Activated T-helper 2 cell treated with anti-CD3 and anti-CD28 coated beads, Interferon-gamma antibody, Interleukin-2, Interleukin-4, amounts not matched to agents 10 μg/mL and 5 μg/mL and 100 μg/mL, durations not matched to agents 14 hours and 24 hours and 36 hours (primary cell): ENCODE measurements at regions of chr12 and their contacts with region 1.

Region 1: GRCh38 chr12:27821259-27821973 is 41.4 kb upstream of the MANSC4 start:
- DNase-seq: no peak
- H3K4me3 Mint-ChIP-seq: no peak overlapping the region
- H3K27ac Mint-ChIP-seq: no peak overlapping the region
- H3K4me1 Mint-ChIP-seq: peaks cover 44% of the 10 kb centered on the region
- H3K27me3 Mint-ChIP-seq: peaks cover 36% of the 10 kb centered on the region

Region 2: GRCh38 chr12:27332407-27333301 is 488.8 kb before region 1 on chr12 and contains the start of gene BMAL2:
- intact Hi-C with region 1: loop called (anchors 5 kb)
- DNase-seq: peak; percentile 40
- H3K4me3 Mint-ChIP-seq: peak within 1 kb of the TSS; percentile 98
- H3K27ac Mint-ChIP-seq: peak within 1 kb of the TSS; percentile 96
- H3K4me1 Mint-ChIP-seq: peaks cover 50% of the 10 kb centered on the region
- H3K27me3 Mint-ChIP-seq: no peaks in the 10 kb centered on the region
- total RNA-seq, gene BMAL2: 58.9 and 59.6 TPM in 2 replicates

Region 3: DNA sequence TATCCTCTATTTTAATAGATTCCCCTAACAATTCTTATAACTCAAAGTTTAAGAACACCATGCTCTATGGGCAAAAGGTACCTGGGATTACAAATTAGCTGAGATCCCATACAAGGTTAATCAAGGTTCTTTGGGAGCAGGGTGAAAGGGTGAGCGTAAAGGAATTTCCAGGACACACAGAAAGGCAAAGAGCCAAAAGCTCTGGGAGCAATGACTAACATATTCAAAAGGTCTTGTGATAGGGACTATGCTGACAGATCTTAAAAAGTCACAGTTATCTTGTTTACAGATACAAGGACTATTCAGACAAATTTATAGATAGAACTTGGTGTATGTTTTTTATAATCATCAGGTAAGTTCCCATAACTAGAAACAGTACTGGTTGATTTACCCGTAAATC is 316.9 kb before region 1 on chr12:
- intact Hi-C with region 1: loop called (anchors 1 kb)
- DNase-seq: no peak
- H3K4me3 Mint-ChIP-seq: no peak overlapping the region
- H3K27ac Mint-ChIP-seq: no peak overlapping the region
- H3K4me1 Mint-ChIP-seq: peaks cover 30% of the 10 kb centered on the region
- H3K27me3 Mint-ChIP-seq: peaks cover 32% of the 10 kb centered on the region

Region 4: DNA sequence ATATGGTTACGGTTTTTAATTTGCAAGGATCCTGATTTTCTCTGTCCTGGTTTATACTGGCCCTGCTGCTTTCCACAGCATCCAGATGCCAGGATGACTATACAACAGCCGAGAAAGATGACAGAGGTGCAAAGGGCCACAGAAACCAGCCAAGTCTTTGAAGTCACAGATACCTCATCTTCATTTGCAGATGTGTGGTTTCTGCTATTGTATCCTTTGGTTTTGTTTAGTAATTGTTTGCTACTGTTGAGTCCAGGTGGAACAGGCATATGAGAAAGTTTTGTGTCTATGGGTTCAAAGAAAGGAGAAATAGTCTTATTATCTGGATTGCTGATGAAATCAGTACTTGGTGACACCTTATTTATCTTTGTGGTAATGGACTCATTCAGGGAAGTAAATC is 58.7 kb before region 1 on chr12:
- intact Hi-C with region 1: loop called (anchors 2 kb)
- DNase-seq: no peak
- H3K4me3 Mint-ChIP-seq: no peak overlapping the region
- H3K27ac Mint-ChIP-seq: no peak overlapping the region
- H3K4me1 Mint-ChIP-seq: peaks cover 20% of the 10 kb centered on the region
- H3K27me3 Mint-ChIP-seq: no peaks in the 10 kb centered on the region

Region 5: GRCh38 chr12:27861428-27862167 is 40.2 kb after region 1 on chr12:
- intact Hi-C with region 1: loop called (anchors 1 kb)
- DNase-seq: no peak
- H3K4me3 Mint-ChIP-seq: no peak overlapping the region
- H3K27ac Mint-ChIP-seq: no peak overlapping the region
- H3K4me1 Mint-ChIP-seq: peaks cover 21% of the 10 kb centered on the region
- H3K27me3 Mint-ChIP-seq: peaks cover 7% of the 10 kb centered on the region

Region 6: GRCh38 chr12:27906658-27907473 is 85.5 kb after region 1 on chr12:
- intact Hi-C with region 1: no loop called
- DNase-seq: no peak
- H3K4me3 Mint-ChIP-seq: no peak overlapping the region
- H3K27ac Mint-ChIP-seq: no peak overlapping the region
- H3K4me1 Mint-ChIP-seq: no peaks in the 10 kb centered on the region
- H3K27me3 Mint-ChIP-seq: peaks cover 5% of the 10 kb centered on the region

Region 7: DNA sequence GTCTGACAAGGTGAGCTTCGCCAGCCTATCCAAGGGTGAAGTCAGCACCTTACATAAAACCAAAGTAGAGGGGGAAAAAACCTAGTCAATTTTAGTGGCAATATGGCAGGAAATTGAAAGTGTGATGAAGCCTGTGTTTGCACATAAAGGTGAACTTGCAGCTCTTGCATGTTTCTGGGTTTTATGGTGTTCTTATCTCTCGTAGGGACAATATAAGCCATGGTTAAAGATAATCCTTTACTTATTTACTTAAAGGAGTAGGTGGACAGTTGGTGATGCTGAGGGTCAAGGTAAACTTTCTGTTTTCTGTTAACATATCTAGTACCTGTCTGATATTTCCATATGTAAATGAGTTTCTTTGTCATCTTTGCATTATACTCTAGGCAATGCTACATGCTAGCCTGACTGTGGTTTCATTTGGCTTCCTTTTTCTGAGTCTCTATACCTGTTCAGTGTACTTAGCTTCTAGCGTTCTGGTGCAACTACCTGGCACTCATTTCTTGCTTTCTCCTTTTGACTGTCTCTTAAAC is 401.7 kb after region 1 on chr12:
- intact Hi-C with region 1: loop called (anchors 1 kb)
- DNase-seq: no peak
- H3K4me3 Mint-ChIP-seq: no peak overlapping the region
- H3K27ac Mint-ChIP-seq: peak overlapping the region; percentile 43
- H3K4me1 Mint-ChIP-seq: peaks cover 32% of the 10 kb centered on the region
- H3K27me3 Mint-ChIP-seq: peaks cover 29% of the 10 kb centered on the region

Region 8: DNA sequence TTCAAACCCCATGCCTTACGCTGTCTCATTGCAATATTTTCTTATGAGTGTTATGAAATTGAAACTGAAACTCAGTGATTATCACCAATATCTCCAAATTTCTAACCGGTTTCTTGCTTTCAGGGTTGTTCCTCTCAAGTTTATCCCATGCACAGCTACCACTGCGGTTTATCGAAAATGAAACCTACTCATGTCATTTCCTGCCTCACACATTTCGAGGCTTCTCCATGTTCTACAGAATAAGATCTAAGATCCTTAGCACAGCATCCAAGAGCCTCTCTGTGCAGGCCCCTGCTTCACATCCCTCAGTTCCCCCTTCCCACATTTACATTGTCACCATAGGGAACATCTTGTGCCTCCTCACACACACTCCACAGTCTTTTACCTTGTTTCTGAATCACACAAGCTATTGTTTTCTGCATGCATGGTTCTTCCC is 1282.1 kb after region 1 on chr12:
- intact Hi-C with region 1: loop called (anchors 5 kb)
- DNase-seq: peak; percentile 65
- H3K4me3 Mint-ChIP-seq: peak overlapping the region; percentile 7
- H3K27ac Mint-ChIP-seq: peak overlapping the region; percentile 60
- H3K4me1 Mint-ChIP-seq: peaks cover 29% of the 10 kb centered on the region
- H3K27me3 Mint-ChIP-seq: peaks cover 10% of the 10 kb centered on the region